IMR-90 (cell line): ENCODE measurements at regions of chr9 and their contacts with region 1.

Region 1: DNA sequence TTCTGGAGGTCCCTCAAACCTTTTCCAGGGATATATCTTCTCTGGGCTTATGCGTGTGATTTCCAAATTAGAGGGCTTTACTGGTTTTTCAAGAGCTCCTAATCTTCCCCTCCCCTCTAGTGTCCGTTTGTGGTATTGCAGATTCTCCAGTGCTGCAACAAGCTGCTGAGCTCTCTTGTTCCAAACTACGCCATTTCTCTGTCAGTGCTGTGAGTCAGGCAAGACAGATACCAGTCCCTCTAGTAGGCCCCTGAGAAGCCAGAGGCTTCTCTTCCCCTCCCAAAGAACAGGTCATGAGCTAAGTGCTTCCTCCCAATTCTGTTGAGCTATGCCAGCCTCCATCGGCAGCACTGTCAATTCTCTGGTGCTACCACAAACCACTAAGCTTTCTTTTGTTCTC is 149.5 kb downstream of the FANCC start:
- DNase-seq: peak; percentile 97
- ATAC-seq: peak; percentile 89
- H3K4me3 ChIP-seq: no peak overlapping the region
- H3K27ac ChIP-seq: peak overlapping the region; percentile 15; the same call in 1 of the 2 replicates
- H3K4me1 ChIP-seq: peaks cover 5% of the 10 kb centered on the region
- H3K27me3 ChIP-seq: no peaks in the 10 kb centered on the region
- CTCF ChIP-seq: peak; percentile 79
- POLR2A ChIP-seq: no peak
- RAD21 ChIP-seq: peak; percentile 72

Region 2: GRCh38 chr9:94827584-94828304 is 340.3 kb before region 1 on chr9:
- CTCF ChIA-PET with region 1: no interaction called
- POLR2A ChIA-PET with region 1: no interaction called
- dilution Hi-C with region 1: no loop called
- in situ Hi-C with region 1: no loop called
- intact Hi-C with region 1: no loop called
- DNase-seq: peak; percentile 52
- ATAC-seq: peak; percentile 68
- H3K4me3 ChIP-seq: no peak overlapping the region
- H3K27ac ChIP-seq: peak overlapping the region; percentile 67; the same call in 1 of the 2 replicates
- H3K4me1 ChIP-seq: peaks cover 4% of the 10 kb centered on the region
- H3K27me3 ChIP-seq: no peaks in the 10 kb centered on the region
- CTCF ChIP-seq: no peak
- POLR2A ChIP-seq: no peak
- RAD21 ChIP-seq: no peak

Region 3: GRCh38 chr9:95127249-95128176 is 40.5 kb before region 1 on chr9:
- CTCF ChIA-PET with region 1: interaction called, 16 read pairs
- POLR2A ChIA-PET with region 1: no interaction called
- dilution Hi-C with region 1: no loop called
- in situ Hi-C with region 1: no loop called
- intact Hi-C with region 1: no loop called
- DNase-seq: peak; percentile 71
- ATAC-seq: peak; percentile 99
- H3K4me3 ChIP-seq: peak overlapping the region; percentile 27; the same call in 1 of the 2 replicates
- H3K27ac ChIP-seq: no peak overlapping the region
- H3K4me1 ChIP-seq: peaks cover 2% of the 10 kb centered on the region; the same call in 1 of the 2 replicates
- H3K27me3 ChIP-seq: no peaks in the 10 kb centered on the region
- CTCF ChIP-seq: peak; percentile 99
- POLR2A ChIP-seq: no peak
- RAD21 ChIP-seq: peak; percentile 87

Region 4: DNA sequence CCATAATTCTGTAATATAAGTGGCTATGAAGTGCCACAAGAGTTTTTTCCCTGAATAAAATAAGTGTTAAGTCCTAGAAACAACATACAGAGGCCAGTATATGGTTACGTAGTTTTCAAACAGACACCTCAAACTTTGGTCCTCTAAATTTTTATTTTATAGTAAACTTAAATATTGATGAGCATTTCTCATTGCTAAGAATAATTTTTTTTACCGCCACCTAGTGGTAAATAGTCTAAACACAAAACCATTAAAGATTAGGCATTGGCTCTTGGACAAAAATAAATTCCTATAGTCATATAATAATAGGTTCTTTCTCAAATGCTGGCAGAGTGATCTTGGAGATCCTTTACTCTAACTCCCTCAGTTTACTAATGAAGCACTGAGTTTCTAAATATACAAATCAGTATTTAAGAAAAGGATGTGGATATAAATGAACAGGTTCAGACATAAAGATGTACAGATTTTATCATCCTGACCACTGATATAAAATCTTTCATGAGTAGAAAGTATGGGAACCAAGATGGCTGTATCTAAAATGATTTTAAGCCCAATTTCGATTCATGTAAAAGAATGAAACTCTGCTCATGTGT is 13.3 kb after region 1 on chr9:
- CTCF ChIA-PET with region 1: interaction called, 12 read pairs
- POLR2A ChIA-PET with region 1: no interaction called
- dilution Hi-C with region 1: no loop called
- in situ Hi-C with region 1: no loop called
- intact Hi-C with region 1: no loop called
- DNase-seq: peak; percentile 9
- ATAC-seq: no peak
- H3K4me3 ChIP-seq: no peak overlapping the region
- H3K27ac ChIP-seq: no peak overlapping the region
- H3K4me1 ChIP-seq: no peaks in the 10 kb centered on the region
- H3K27me3 ChIP-seq: no peaks in the 10 kb centered on the region
- CTCF ChIP-seq: peak; percentile 49
- POLR2A ChIP-seq: no peak
- RAD21 ChIP-seq: 0 out of 2 replicates have a peak, but pooled peaks have one; percentile 11